ENCODE measurements at regions of chr19 and their contacts with region 1.

Region 1: DNA sequence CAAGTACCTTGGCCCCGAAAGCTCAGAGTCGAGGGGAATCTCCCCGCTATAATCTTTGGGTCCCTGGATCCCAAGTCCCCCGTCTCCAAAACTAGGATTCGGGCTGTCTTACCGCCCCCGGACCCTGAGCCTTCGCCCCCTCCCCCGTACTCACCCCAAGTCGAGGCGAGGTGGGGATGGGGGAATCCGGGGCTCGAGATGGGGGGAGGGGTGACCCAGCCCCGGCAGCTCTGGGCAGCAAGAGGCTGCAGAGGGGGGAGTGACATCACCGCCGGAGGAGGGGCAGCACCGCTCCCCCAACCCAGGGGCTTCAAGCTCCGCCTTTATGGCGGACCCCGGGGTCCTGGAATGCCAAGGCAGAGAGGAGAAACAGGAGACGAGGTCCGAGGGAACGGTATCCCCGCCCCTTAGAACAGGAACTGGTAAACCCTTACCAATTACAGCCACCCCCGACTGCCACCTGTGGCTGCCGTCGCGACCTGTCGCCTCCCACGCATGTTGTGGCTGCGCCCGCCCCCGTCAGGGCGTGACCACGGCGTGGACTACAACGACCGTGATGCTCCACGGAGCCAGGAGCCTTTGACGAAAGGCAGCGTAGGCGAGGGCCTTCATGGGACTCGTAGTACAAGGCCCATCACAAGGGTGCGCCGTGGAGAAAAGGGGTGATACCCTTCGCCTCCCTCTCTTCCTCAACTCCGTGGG is 4.0 kb upstream of the KCNC3 start:
- DNase-seq: no peak
- H3K4me3 Mint-ChIP-seq: no peak overlapping the region
- H3K27ac Mint-ChIP-seq: no peak overlapping the region
- H3K4me1 Mint-ChIP-seq: no peaks in the 10 kb centered on the region
- H3K27me3 Mint-ChIP-seq: peaks cover 37% of the 10 kb centered on the region
- CTCF ChIP-seq: no peak

Region 2: DNA sequence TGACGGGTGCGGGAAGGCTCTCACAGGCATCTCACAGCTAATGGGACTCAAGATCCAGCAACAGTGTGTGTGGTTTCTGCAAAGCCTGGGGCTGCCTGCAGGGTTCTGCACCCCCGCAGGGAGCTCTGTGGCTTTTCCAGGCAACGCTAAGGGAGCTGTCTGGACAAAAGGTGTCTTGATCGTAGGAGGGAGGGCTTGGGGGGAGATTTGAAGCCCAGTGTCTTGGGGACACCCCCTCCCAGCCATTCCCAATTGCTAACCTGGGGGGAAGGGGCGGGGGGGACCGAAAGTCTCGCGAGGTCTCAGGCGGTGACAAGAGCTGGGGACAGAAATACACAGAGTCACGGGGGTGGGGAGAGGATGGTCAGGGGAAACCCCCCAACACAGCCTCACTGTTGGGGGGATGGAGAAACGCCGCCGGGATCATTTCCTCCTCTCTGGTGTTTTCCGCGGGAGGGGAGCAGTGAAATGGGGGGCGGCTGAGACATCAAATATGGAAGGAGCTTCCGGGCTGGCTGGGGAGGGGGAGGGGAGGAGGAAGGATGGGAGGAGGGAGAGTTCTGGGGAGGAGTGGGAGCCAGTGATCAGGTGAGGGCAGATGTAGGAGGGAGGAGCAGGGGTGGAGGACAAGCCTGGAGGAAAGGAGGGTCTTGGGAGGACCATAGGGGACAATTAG is 17.3 kb before region 1 on chr19:
- CTCF ChIA-PET with region 1: no interaction called
- POLR2A ChIA-PET with region 1: no interaction called
- intact Hi-C with region 1: no loop called
- DNase-seq: no peak
- H3K4me3 Mint-ChIP-seq: no peak overlapping the region
- H3K27ac Mint-ChIP-seq: no peak overlapping the region
- H3K4me1 Mint-ChIP-seq: peaks cover 6% of the 10 kb centered on the region
- H3K27me3 Mint-ChIP-seq: peaks cover 33% of the 10 kb centered on the region
- CTCF ChIP-seq: no peak

Region 3: DNA sequence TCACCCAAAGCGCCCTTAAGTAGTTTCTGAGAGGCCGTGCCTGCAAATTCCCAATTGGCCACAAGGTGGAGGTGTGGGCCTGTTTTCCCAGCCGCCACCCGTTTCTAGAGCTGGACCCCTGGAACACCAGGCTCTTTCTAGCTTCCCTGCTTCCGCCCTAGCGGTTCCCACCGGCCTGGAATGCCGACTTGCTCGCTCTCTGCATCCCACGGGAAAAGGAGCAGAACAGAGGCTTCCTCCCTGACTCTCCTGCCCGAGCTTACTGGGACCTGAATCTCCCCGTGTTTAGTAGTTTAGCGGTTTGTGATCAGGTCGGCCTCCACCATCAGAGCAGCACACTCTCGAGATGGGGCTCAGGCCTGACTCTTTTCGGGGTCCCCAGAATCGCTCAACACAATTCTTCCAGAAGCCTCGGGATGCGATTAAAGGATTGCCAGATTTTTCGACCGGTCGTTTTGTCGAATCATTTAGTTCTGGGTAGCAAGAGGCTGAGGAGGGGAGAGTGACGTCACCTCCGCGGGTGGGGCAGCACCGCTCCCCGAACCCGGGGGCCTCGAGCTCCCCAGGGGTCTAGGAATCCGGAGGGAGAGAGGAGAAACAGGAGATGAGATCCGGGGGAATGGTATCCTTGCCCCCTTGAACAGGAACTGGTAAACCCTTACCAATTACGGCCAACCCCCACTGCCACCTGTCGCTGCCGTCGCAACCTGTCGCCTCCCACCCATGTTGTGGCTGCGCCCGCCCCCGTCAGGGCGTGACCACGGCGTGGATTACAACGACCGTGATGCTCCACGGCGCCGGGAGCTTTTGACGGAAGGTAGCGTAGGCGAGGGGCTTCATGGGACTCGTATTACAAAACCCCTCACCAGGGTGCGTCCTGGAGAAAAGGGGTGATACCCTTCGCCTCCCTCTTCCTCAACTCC is 24.3 kb after region 1 on chr19:
- CTCF ChIA-PET with region 1: interaction called, 10 read pairs
- POLR2A ChIA-PET with region 1: no interaction called
- intact Hi-C with region 1: no loop called
- DNase-seq: peak; percentile 61
- H3K4me3 Mint-ChIP-seq: peak overlapping the region; percentile 67
- H3K27ac Mint-ChIP-seq: no peak overlapping the region
- H3K4me1 Mint-ChIP-seq: no peaks in the 10 kb centered on the region
- H3K27me3 Mint-ChIP-seq: no peaks in the 10 kb centered on the region
- CTCF ChIP-seq: peak; percentile 87